RWPE1 (cell line): ENCODE measurements at regions of chr4 and their contacts with region 1.

Region 1: GRCh38 chr4:83074086-83074704 is 39.2 kb downstream of the COPS4 start:
- DNase-seq: peak; percentile 45
- H3K27ac ChIP-seq: peak overlapping the region; percentile 34; the same call in 1 of the 2 replicates
- CTCF ChIP-seq: peak; percentile 74

Region 2: DNA sequence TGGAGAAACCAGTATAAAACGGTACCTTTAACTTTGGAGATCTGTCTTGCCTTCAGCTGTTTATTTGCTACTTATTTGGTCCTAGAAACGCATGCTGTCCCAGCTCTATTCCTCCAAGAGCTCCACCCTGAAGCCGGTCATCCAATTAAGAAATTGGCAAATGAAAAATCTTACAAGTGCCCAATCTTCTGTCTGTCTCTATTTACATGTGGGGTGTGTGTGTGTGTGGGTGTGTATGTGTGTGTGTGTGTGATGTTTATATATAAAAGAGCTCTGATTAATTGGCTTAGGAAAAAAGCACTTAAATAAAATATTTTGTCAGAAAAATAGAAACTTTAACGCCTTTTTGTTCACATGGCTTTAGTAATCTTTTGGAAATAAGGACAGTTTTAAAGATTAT is 22.8 kb after region 1 on chr4:
- CTCF ChIA-PET with region 1: interaction called, 10 read pairs
- POLR2A ChIA-PET with region 1: no interaction called
- DNase-seq: no peak
- H3K27ac ChIP-seq: no peak overlapping the region
- CTCF ChIP-seq: no peak

Region 3: DNA sequence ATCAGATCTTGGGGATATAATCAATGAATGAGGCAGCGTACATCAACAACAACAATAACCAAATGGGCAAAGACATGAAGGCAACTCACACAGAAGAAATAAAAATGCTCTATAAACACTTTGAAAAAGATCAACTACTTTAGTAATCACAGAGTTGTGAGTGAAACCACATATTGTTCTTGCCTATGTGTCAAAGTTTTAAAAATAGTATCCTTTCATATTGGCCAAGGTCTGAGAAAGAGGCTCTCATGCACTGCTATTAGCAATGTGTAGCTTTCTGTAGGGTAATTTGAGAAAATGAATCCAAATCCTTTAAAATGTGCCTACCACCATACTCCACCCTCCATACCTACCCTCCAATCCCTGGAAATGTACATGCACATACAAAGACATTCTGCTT is 185.4 kb after region 1 on chr4:
- CTCF ChIA-PET with region 1: interaction called, 20 read pairs
- POLR2A ChIA-PET with region 1: no interaction called
- DNase-seq: no peak
- H3K27ac ChIP-seq: no peak overlapping the region
- CTCF ChIP-seq: no peak